Endothelial cell of umbilical vein (primary cell): ENCODE measurements at regions of chr11 and their contacts with region 1.

Region 1: GRCh38 chr11:77082838-77083562 is 16.2 kb downstream of the CAPN5 start:
- DNase-seq: peak; percentile 64
- H3K4me3 ChIP-seq: peak overlapping the region in 1 of 3 experiments; percentile 5
- H3K27ac ChIP-seq: no peak overlapping the region
- H3K4me1 ChIP-seq: peaks cover 14% of the 10 kb centered on the region
- H3K27me3 ChIP-seq: no peaks in the 10 kb centered on the region
- CTCF ChIP-seq: no peak
- POLR2A ChIP-seq: no peak

Region 2: DNA sequence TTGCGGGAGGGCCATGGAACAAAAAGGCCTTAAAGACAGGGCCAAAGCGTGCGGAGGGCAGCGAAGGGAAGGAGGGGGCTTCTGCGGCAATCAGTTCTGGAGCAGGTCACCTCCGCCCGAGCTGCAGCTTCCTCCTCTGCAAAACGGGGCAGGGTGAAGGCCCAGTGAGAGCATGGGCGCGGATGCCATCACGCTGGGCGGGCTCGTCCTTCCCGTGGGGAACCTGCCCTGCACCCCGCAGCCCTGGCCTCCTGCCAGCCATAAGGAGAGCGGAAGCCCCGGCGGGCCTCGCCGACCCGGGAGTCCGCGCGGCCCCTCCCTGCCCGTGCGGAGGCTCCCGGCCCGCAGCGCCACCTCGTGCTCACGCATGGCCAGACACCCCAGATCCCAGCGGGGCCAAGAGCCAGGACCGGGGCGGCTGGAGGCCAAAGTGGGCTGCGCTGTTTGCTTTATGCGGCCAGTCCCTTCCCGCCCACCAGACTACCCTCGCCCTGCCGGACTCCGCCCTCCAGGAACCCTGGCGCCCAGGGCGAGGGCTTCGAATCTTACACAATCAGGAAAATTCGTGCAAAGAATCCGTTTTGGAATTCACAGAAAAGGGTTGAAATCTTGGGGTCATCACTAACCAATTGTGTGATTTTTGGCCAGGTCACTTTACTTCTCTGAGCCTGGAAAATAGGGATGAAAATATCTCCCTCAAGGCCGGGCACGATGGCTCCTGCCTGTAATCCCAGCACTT is 283.8 kb before region 1 on chr11:
- CTCF ChIA-PET with region 1: no interaction called
- POLR2A ChIA-PET with region 1: no interaction called
- dilution Hi-C with region 1: no loop called
- intact Hi-C with region 1: no loop called
- DNase-seq: peak; percentile 62
- H3K4me3 ChIP-seq: peak overlapping the region in 1 of 3 experiments; percentile 30
- H3K27ac ChIP-seq: no peak overlapping the region
- H3K4me1 ChIP-seq: peaks cover 7% of the 10 kb centered on the region
- H3K27me3 ChIP-seq: no peaks in the 10 kb centered on the region
- CTCF ChIP-seq: peak; percentile 89 to 95
- POLR2A ChIP-seq: no peak

Region 3: DNA sequence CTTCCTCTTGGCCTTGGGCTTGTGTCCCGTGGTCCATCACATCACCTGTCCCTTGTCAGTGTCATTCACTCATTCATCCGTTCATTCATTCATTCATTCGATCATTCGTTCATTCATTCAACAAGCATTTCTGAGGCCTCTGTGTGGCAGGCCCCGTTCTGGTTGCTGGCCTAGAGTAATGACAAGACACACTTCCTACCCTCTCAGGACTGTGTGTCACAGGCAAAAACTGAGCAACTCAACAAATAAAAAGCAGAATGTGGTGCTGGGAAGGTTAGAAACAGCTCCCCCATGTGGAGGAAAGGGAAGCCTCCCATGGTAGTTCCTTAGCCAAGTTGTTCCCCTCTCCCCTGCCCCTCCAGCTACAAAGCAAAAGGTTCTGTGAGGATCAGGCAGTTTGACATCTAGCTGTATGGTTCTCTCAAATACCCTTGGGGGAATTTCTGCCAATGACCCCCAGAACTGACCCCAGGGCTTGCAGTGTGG is 18.1 kb after region 1 on chr11:
- CTCF ChIA-PET with region 1: interaction called, 10 read pairs
- POLR2A ChIA-PET with region 1: no interaction called
- dilution Hi-C with region 1: no loop called
- intact Hi-C with region 1: no loop called
- DNase-seq: peak; percentile 30
- H3K4me3 ChIP-seq: no peak overlapping the region
- H3K27ac ChIP-seq: no peak overlapping the region
- H3K4me1 ChIP-seq: no peaks in the 10 kb centered on the region
- H3K27me3 ChIP-seq: no peaks in the 10 kb centered on the region
- CTCF ChIP-seq: peak; percentile 67 to 69
- POLR2A ChIP-seq: no peak